Activated CD4-positive, alpha-beta T cell treated with anti-CD3 and anti-CD28 coated beads for 36 hours (primary cell): ENCODE measurements at regions of chr17 and their contacts with region 1.

Region 1: DNA sequence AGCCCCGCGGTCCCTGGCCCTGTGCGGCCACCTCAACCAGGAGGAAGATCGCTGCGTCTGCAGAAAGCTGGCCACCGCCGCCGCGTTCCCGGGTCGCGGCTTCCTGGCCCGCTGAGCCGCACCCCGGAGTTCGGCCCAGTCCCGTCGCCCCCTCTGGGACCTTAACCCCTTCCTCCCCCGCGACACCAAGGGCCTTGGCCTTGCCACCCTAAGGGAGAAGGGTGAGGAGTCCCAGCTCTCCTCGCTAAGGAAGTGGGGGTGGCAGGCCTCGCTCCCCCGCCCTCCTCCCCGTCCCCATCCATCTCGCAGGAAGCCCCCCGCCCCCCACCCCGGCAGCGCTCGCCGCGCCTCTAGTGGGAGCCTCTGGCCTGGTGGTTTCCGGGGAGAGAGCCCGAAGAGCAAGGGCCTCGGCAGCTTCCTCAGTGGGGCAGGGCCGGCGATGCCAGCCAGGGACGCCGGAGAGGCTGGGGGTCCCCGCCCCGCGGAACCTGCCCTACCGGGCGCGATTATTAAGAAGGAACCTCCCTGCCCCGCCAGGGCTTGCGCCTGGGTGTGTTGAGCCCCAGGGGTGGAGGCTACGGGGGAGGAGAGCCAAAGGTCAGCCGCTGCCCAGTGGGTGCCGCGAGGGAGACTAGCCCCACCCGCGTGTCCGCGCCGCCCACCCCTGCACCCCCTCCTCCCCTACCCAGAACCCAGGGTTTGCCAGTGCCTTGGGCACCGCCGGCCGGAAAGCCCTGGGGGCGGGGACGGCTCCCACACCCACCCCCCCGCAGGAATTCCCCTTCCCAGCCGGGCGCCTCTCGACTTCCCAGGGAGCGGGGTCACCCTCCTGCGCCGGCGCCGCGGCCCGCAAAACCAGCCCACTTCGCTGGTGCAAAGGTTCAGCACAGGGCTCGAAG is 6.8 kb downstream of the CBX4 start:
- DNase-seq: peak; percentile 13
- ATAC-seq: no peak
- H3K4me3 Mint-ChIP-seq: no peak overlapping the region
- H3K27ac Mint-ChIP-seq: no peak overlapping the region
- H3K4me1 Mint-ChIP-seq: peaks cover 19% of the 10 kb centered on the region
- H3K27me3 Mint-ChIP-seq: peaks cover 2% of the 10 kb centered on the region

Region 2: GRCh38 chr17:79810130-79811010 is 22.1 kb before region 1 on chr17:
- CTCF ChIA-PET with region 1: interaction called, 6 read pairs
- POLR2A ChIA-PET with region 1: interaction called, 10 read pairs
- intact Hi-C with region 1: no loop called
- DNase-seq: peak; percentile 90
- ATAC-seq: peak; percentile 90
- H3K4me3 Mint-ChIP-seq: peak overlapping the region; percentile 18
- H3K27ac Mint-ChIP-seq: no peak overlapping the region
- H3K4me1 Mint-ChIP-seq: peaks cover 39% of the 10 kb centered on the region
- H3K27me3 Mint-ChIP-seq: peaks cover 59% of the 10 kb centered on the region

Region 3: GRCh38 chr17:80008383-80008840 is 176.0 kb after region 1 on chr17:
- CTCF ChIA-PET with region 1: no interaction called
- POLR2A ChIA-PET with region 1: no interaction called
- intact Hi-C with region 1: no loop called
- DNase-seq: peak; percentile 91
- ATAC-seq: peak; percentile 95
- H3K4me3 Mint-ChIP-seq: no peak overlapping the region
- H3K27ac Mint-ChIP-seq: no peak overlapping the region
- H3K4me1 Mint-ChIP-seq: peaks cover 9% of the 10 kb centered on the region
- H3K27me3 Mint-ChIP-seq: no peaks in the 10 kb centered on the region